Left cardiac atrium (tissue), 4 donors: ENCODE measurements at regions of chr6 and their contacts with region 1.

Region 1: GRCh38 chr6:108541838-108542759 is 18.6 kb upstream of the FOXO3 start:
- DNase-seq: peak; percentile 60
- ATAC-seq: peak; percentile 85 to 88

Region 2: GRCh38 chr6:108592371-108593337 is 50.6 kb after region 1 on chr6:
- intact Hi-C with region 1: no loop called
- DNase-seq: peak; percentile 38
- ATAC-seq: peak; percentile 36 to 50

Region 3: DNA sequence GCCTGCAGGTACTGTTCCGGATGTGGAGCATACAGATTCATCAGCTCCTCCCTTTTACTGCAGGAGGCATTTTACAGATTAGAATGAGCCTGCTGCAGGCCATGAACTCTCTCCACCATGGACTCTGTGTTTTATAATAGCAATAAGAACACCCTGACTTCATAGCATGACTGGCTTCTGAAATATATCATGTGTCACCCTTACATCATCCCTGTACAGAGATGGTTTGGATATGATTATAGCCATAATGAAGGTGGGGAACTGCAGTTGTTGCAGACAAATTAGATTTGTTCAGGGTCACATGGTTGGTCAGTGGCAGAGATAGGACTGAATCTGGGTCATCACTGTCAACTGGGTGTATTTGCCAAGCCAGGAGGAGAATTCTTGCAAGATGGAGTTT is 119.3 kb after region 1 on chr6:
- intact Hi-C with region 1: no loop called
- DNase-seq: no peak
- ATAC-seq: peak in 1 of 2 donors; percentile 33

Region 4: DNA sequence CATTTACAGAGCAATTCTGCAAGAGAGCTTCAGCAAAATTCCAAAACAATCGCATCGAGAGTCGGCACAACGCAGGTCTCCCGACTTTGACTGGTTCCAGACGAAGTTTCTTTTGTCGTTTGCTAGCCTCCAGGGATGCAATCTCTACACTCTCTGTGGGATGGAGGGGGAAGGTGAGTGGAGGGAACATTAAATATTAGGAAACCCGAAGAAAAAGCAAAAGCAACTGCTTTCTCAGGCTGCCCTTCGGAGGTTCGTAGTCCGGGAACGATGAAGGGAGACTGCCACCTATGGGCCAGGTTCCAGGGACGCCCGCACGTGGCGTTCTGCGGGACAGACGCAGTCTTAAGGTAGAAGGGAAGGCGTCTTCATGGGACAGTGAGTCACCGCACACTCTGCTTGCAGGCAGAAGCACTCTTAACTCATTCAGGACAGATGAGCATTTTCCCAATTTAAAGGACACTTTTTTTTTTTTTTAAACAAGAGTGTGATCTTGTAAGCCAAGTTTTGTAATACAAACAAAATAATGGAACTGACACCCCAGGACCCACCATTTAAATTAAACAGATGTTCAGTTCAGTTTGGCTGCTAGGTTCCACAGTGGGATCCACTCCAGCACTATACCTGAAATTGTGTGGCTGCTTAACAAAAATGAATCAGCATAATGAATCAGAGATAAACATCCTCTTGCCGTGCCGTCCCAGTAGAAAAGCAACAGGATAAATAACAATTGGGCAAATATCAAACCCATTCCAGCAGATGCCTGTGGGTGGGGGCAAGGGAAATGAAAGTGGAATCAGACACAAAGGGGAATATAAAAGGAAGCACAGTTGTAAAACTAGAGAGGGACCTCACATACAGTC is 240.3 kb after region 1 on chr6:
- intact Hi-C with region 1: loop called (anchors 2 to 5 kb)
- DNase-seq: peak; percentile 85
- ATAC-seq: peak; percentile 94 to 95

Region 5: GRCh38 chr6:108896111-108896661 is 354.1 kb after region 1 on chr6:
- intact Hi-C with region 1: loop called (anchors 2 to 5 kb)
- DNase-seq: no peak
- ATAC-seq: peak; percentile 45 to 75